ENCODE measurements at regions of chr1 and their contacts with region 1.

Region 1: DNA sequence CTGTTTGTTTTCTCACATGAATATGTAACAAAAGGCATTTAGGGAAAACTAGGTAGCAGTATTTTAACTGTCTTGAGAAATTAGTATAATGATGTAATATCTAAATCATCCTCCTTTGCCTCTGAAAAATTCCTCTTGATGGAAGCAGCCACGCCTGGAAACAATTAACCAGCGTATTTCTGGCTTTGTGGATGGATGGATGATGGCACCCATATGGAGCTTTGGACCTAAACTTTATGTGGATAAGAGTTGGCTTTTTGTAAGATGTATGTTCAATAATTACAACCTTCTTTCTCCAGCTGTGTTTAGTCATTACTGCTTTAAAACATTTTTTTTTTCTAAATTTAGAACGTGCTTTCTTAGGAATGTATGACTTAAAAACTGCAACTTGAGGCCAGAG is 12.7 kb downstream of the CDCA8 start:
- DNase-seq: no peak

Region 2: DNA sequence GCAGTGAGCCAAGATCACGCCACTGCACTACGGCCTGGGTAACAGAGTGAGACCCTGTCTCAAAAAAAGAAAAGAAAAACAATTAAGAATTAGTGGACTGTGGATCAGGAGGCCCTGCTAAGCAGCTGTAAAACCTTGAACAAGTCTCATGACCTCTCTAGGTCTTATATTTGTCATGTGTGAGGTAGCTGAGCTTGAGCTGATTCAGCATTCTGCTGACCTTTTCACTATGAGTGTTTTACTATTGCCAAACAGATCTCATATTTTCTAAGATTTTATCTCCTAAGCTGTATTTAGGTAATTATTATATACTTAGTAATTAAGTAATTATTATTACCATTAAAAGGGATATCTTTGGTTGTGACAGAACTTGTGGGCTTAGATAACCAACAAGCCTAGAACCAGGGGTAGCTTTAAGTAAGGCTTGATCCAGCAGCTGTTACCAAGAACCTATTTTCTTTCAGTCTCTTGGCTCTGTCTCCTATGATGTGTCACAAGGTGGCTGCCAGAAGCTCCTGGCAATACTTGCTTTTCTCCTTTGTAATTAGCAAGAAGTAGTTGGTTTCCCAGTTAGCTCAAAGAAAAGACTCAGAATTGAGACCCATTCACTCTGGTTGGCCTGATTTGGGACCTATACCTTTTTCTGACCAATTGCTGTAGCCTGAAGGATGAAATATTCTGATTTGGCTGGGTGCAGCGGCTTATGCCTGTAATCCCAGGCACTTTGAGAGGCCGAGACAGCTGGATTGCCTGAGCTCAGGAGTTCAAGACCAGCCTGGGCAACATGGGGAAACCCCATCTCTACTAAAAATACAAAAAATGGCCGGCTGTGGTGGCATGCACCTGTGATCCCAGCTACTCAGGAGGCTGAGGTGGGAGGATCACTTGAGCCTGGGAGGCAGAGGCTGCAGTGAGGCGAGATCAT is 239.1 kb before region 1 on chr1:
- intact Hi-C with region 1: no loop called
- DNase-seq: no peak

Region 3: GRCh38 chr1:37741130-37741529 is 36.2 kb after region 1 on chr1:
- intact Hi-C with region 1: loop called in 1 of 2 experiments (anchors 1 kb)
- DNase-seq: peak; percentile 26

Region 4: GRCh38 chr1:38221006-38221649 is 516.2 kb after region 1 on chr1:
- intact Hi-C with region 1: no loop called
- DNase-seq: no peak

Measured in posterior vena cava (tissue), 2 donors.